Dorsolateral prefrontal cortex (tissue), 120 donors: ENCODE measurements at regions of chr21 and their contacts with region 1.

Region 1: DNA sequence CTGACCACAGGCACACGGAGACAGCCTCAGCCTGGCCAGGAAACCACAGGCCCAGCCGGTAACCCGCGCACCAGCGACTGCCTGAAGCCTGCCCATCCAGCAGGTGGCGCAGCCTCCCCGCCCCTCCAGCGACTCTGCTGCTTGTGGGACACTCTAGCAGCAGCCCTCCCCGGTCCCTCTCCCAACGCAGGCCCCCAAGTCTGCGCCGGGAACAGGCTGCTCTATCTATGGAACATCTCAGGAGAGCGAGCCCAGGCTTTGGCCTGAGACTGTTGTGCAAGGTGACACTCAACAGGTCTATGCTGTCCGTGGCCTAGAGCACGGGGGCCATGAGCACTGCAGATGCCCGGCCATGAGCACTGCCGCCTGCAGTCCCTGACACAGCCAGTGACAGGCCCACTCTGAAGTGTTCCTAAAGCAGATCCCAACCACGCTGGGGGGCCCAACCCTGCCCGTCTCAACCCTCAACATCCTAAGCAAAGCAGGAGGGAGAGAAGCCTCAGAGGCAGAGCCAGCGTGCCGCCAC is 28.4 kb downstream of the WDR4 start:
- DNase-seq: peak in 1 of 10 donors; percentile 27
- H3K4me3 ChIP-seq: no peak overlapping the region
- H3K27ac ChIP-seq: no peak overlapping the region
- H3K27me3 ChIP-seq: no peaks in the 10 kb centered on the region
- CTCF ChIP-seq: peak in 17 of 56 donors; percentile 11 to 38 (median 18)

Region 2: DNA sequence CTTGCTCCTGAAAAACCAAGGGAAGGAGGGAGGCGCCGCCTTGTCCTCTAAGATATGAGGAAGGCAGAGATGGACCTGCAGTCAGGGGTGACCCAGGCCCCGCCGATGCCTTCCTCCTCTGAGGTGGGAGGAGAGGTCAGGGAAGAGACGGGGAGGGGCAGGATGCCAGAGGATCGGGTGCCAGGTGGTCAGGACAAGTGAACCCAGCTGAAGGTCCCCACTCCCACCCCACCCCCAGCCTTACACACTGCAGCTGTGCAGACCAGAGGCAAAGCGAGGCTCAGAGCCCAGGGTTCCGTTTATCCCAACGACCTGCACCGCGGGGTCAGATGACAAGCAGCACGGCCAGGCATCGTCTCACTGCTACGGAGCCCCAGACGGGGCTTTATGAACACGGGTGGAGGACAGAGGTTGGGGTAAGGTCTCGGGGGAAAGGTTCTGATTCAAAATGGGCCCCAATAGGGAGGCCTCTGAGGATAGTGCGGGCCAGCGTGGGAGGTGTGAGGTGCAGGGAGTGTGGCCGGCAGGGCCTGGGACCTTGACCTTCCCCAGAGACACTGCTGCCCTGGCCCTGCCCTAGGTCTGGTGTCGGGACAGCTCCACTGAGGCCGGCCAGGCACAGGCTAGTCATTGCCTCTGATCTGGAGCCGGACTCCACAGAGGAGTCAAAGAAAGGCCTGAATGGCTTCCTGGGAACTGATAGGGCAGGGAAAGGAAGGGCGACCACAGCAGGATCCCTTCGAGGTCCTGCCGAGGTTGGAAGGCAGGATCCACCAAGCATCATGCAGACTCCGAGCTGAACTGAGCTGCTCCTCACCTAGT is 84.0 kb before region 1 on chr21:
- intact Hi-C with region 1: no loop called
- DNase-seq: no peak
- H3K4me3 ChIP-seq: no peak overlapping the region
- H3K27ac ChIP-seq: no peak overlapping the region
- H3K27me3 ChIP-seq: no peaks in the 10 kb centered on the region
- CTCF ChIP-seq: no peak

Region 3: GRCh38 chr21:42837421-42838211 is 13.3 kb before region 1 on chr21:
- intact Hi-C with region 1: no loop called
- DNase-seq: peak in 3 of 10 donors; percentile 26 to 40 (median 34)
- H3K4me3 ChIP-seq: no peak overlapping the region
- H3K27ac ChIP-seq: no peak overlapping the region
- H3K27me3 ChIP-seq: no peaks in the 10 kb centered on the region
- CTCF ChIP-seq: no peak

Region 4: DNA sequence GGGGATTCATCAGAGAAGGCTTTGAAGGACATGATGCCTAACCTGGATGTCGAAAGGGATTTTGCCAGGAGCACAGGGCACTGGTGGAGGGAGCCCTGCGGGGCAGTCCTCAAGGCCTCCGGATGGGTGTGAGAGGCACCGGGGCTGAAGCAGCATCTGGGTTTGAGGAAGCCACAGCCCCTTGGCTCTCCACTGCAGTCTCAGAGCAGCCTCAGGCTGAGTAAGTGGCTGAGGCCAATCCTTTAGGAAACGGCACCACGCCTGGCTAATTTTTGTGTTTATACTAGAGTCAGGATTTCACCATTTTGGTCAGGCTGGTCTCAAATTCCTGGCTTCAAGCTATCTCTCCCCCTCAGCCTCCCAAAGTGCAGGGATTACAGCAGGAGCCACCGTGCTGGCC is 62.5 kb after region 1 on chr21:
- intact Hi-C with region 1: loop called in 1 of 2 experiments (anchors 10 kb)
- DNase-seq: no peak
- H3K4me3 ChIP-seq: no peak overlapping the region
- H3K27ac ChIP-seq: peak overlapping the region in 2 of 59 donors; percentile 19 to 45
- H3K27me3 ChIP-seq: no peaks in the 10 kb centered on the region
- CTCF ChIP-seq: no peak